Activated B cell treated with CpG ODN at 0.5 μM for 24 hours (primary cell): ENCODE measurements at regions of chr17 and their contacts with region 1.

Region 1: GRCh38 chr17:64129764-64130558 is at the start of gene ERN1:
- DNase-seq: peak; percentile 81
- ATAC-seq: peak; percentile 88
- H3K4me3 Mint-ChIP-seq: peak within 1 kb of the TSS; percentile 83
- H3K27ac Mint-ChIP-seq: peak within 1 kb of the TSS; percentile 88
- H3K4me1 Mint-ChIP-seq: peaks cover 27% of the 10 kb centered on the region
- H3K27me3 Mint-ChIP-seq: peaks cover 1% of the 10 kb centered on the region
- CTCF ChIP-seq: no peak
- total RNA-seq, gene ERN1: 11.9 and 12.9 TPM in 2 replicates

Region 2: DNA sequence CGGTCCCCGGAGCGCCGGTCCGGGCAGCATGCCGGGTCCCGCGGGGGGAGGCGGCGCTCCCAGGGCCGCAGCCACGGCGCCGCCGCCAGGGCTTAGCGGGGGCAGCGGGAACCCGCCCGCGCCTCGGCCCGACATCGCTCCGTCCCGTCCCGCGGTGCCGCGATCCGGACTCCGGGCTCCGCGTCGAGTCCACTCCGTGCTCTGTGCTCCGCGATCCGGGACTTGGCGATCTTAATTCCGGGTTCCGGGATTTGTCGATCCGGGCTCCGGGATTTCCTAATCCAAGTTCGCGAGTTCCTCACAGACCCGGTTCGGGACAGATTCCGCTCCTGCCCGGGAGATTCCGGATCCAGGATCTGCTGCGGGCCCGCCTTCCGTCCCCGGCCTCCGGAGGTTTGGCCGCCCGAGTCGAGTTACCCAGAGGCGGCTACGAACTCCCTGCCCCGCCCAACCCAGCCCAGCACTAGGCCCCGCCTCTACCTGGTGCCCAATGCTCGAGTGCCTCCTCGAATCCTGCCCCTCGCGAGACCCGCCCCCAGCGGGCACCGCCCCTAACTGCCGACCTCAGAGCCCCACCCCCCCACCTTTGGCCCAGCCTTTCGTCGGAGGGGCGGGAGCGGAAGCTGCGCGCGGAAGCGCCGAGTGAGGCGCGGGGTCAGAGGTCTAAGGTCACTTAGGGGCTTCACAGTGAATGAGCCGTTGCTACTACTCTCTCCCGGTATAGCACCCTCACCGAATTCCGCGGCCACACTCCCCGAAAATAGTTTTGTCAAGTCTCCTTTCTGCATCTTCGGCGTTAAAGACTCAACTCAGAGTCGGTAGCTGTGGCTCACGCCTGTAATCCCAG is 287.2 kb before region 1 on chr17 and contains the start of gene SMARCD2:
- CTCF ChIA-PET with region 1: no interaction called
- POLR2A ChIA-PET with region 1: interaction called, 3 read pairs
- intact Hi-C with region 1: loop called (anchors 1 kb)
- DNase-seq: peak; percentile 96
- ATAC-seq: peak; percentile 90
- H3K4me3 Mint-ChIP-seq: peak within 1 kb of the TSS; percentile 94
- H3K27ac Mint-ChIP-seq: peak within 1 kb of the TSS; percentile 95
- H3K4me1 Mint-ChIP-seq: peaks cover 49% of the 10 kb centered on the region
- H3K27me3 Mint-ChIP-seq: no peaks in the 10 kb centered on the region
- CTCF ChIP-seq: no peak
- total RNA-seq, gene SMARCD2: 114 and 117 TPM in 2 replicates

Region 3: DNA sequence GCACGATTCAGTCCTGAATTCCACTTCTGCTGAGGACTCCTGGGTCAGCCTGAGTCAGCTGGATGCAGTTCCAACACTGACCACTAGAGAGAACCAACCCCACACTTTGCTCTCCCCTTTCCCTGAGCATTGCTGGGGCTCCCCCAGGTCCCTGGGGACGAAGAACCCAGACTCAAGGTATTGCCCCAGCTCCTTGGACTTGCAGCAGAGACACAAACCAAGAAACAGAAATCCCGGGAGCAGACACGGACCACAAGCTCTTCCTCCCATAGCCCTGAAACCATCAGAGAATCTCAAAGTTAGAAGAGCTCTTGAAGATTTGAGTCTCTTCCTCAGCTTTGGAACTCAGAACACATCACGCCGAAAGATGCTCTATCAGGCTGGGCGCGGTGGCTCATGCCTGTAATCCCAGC is 210.6 kb before region 1 on chr17:
- CTCF ChIA-PET with region 1: interaction called, 116 read pairs
- POLR2A ChIA-PET with region 1: interaction called, 14 read pairs
- intact Hi-C with region 1: no loop called
- DNase-seq: peak; percentile 65
- ATAC-seq: peak; percentile 49
- H3K4me3 Mint-ChIP-seq: peak overlapping the region; percentile 77
- H3K27ac Mint-ChIP-seq: peak overlapping the region; percentile 75
- H3K4me1 Mint-ChIP-seq: peaks cover 85% of the 10 kb centered on the region
- H3K27me3 Mint-ChIP-seq: no peaks in the 10 kb centered on the region
- CTCF ChIP-seq: no peak

Region 4: GRCh38 chr17:63969278-63969677 is 160.7 kb before region 1 on chr17:
- CTCF ChIA-PET with region 1: no interaction called
- POLR2A ChIA-PET with region 1: no interaction called
- intact Hi-C with region 1: no loop called
- DNase-seq: no peak
- ATAC-seq: no peak
- H3K4me3 Mint-ChIP-seq: no peak overlapping the region
- H3K27ac Mint-ChIP-seq: no peak overlapping the region
- H3K4me1 Mint-ChIP-seq: peaks cover 6% of the 10 kb centered on the region
- H3K27me3 Mint-ChIP-seq: peaks cover 9% of the 10 kb centered on the region
- CTCF ChIP-seq: no peak

Region 5: DNA sequence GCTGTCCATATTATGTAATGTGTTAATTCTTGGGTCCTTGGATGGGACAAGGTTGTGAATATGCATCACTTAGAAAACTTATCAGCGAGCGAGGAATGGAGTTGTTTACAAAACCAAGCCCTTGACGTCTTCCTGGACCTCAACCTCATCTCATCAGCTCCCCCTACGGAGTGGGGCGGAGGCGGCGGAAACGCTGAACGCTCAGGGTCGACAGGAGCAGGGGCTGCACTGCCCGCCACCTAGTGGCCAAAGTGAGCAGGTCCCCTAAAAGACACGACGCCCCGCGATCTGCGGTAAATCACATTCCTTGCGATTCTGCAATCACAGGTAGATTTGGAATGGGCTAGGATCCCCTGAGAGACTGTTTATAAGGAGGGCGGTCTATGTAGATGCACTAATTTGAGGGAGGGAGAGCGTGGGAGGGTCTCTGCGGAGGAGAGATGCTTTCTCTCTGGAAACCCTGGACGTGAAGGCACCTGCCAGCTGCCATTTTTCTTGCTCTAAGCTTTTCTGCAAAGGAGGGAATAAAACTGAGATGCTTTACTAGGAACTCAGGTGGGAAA is 104.1 kb before region 1 on chr17:
- CTCF ChIA-PET with region 1: interaction called, 411 read pairs
- POLR2A ChIA-PET with region 1: interaction called, 22 read pairs
- intact Hi-C with region 1: loop called (anchors 1 kb)
- DNase-seq: peak; percentile 72
- ATAC-seq: peak; percentile 92
- H3K4me3 Mint-ChIP-seq: peak overlapping the region; percentile 73
- H3K27ac Mint-ChIP-seq: peak overlapping the region; percentile 62
- H3K4me1 Mint-ChIP-seq: peaks cover 42% of the 10 kb centered on the region
- H3K27me3 Mint-ChIP-seq: no peaks in the 10 kb centered on the region
- CTCF ChIP-seq: peak; percentile 80

Region 6: DNA sequence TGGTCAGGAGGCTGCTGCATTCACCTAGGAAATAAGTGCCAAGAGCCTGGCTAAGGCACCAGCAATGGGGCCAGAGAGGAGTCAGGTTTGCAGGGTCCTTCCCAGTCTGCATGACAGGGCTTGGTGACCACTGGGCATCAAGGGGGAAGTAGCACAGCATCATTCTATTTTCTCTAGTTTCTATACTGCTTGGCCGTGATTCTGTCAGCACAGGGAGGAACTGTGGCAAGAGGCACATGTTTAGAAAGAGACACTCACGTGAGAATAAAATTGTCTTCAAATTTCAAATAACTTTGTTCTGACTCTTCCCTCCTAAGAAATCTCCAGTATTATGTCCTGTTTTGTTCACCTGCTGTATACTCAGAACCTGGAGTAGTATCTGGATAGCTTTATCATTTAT is 37.8 kb before region 1 on chr17:
- CTCF ChIA-PET with region 1: interaction called, 7 read pairs
- POLR2A ChIA-PET with region 1: interaction called, 14 read pairs
- intact Hi-C with region 1: no loop called
- DNase-seq: no peak
- ATAC-seq: no peak
- H3K4me3 Mint-ChIP-seq: no peak overlapping the region
- H3K27ac Mint-ChIP-seq: no peak overlapping the region
- H3K4me1 Mint-ChIP-seq: peaks cover 11% of the 10 kb centered on the region
- H3K27me3 Mint-ChIP-seq: no peaks in the 10 kb centered on the region
- CTCF ChIP-seq: no peak

Region 7: DNA sequence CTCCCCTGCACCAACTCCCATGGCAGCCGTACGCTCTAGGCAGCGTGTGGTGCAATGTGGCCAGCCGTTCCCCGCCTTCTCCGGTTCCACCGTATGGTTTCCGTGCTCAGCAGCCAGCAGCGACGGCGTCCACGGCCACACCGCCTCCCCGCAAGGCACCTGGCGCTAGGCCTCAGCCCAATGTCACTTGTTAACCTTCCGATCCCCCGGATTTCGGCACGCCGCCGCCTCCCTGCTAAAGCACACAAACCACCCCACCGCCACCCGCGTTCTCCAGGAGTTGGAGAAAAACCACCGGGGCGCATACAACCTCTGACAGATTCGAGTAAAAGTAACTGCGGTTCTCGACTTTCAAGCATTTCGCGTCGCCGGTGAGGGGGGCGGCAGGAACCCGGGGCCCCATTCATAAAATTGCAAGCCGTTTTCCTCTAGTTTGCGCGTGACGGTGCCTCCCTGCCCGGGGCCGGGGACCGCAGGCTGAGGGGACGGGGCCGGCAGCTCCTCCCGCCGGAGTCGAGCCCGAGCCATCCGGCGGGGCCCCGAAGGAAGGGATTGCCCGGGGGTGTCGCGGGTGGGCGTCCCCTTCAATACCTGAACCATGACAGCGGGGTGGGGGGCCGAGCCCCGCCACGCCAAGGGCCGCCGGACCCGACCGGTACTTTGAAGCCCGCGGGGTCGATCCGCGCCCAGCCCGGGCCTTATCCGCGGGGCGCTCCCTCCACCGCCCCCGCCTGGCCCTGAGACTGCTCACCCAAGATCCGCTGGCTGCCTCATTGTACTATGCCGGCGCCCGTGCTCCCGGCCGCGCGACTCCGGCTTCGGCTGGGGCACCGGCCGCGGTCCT is 132.7 kb after region 1 on chr17 and contains the start of gene TEX2:
- CTCF ChIA-PET with region 1: no interaction called
- POLR2A ChIA-PET with region 1: no interaction called
- intact Hi-C with region 1: loop called (anchors 1 kb)
- DNase-seq: peak; percentile 43
- ATAC-seq: peak; percentile 25
- H3K4me3 Mint-ChIP-seq: peak within 1 kb of the TSS; percentile 88
- H3K27ac Mint-ChIP-seq: peak within 1 kb of the TSS; percentile 80
- H3K4me1 Mint-ChIP-seq: peaks cover 19% of the 10 kb centered on the region
- H3K27me3 Mint-ChIP-seq: peaks cover 10% of the 10 kb centered on the region
- CTCF ChIP-seq: no peak
- total RNA-seq, gene TEX2: 8.1 TPM in 2 replicates